ENCODE measurements at regions of chr6 and their contacts with region 1.

Region 1: DNA sequence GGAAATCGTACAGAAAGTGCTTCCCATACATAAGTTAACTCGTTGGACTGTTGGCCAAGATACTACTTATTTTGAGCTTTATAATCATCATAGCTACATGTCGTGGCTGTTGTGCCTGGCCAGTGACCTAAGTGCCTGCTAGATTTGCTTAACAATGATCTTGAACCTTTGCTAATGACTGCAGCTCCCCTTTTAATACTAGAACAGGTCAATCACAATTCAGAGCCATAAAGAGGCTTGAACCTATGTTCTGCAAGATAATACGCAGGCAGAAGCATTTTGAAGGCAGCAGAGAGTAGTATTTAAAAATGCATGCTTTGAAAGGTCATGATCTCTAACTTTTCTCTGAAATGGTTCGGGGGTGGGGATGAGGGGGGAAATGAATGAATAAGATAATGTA is 2.5 kb downstream of the MRS2 start:
- DNase-seq: no peak
- H3K4me3 ChIP-seq: no peak overlapping the region
- H3K27ac ChIP-seq: no peak overlapping the region
- H3K4me1 ChIP-seq: peaks cover 0 to 17% (median 12%) of the 10 kb centered on the region in 4 donors
- H3K27me3 ChIP-seq: no peaks in the 10 kb centered on the region
- CTCF ChIP-seq: no peak
- EP300 ChIP-seq: no peak
- POLR2A ChIP-seq: no peak

Region 2: DNA sequence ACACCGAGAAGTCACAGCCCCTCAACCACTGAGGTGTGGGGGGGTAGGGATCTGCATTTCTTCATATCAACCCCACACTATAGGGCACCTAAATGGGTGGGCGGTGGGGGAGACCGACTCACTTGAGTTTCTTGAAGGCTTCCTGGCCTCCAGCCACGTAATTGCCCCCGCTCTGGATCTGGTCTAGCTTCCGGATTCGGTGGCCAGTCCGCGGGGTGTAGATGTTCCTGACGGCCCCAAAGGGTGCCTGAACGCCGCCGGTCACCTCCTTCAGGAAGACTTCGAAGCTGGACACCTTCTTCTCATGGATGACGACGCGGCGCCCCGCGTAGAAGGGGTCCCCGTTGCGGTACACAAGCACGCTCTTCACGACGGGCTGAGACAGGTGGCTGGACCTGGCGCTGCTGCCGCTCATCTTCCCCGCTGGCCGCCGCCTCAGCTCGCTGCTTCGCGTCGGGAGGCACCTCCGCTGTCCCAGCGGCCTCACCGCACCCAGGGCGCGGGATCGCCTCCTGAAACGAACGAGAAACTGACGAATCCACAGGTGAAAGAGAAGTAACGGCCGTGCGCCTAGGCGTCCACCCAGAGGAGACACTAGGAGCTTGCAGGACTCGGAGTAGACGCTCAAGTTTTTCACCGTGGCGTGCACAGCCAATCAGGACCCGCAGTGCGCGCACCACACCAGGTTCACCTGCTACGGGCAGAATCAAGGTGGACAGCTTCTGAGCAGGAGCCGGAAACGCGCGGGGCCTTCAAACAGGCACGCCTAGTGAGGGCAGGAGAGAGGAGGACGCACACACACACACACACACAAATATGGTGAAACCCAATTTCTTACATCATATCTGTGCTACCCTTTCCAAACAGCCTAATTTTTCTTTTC is 47.7 kb before region 1 on chr6 and contains the start of gene DCDC2:
- intact Hi-C with region 1: loop called (anchors 2 kb)
- DNase-seq: peak; percentile 64
- H3K4me3 ChIP-seq: peak within 1 kb of the TSS in 3 of 4 donors; percentile 11 to 34 (median 23)
- H3K27ac ChIP-seq: no peak within 1 kb of the TSS
- H3K4me1 ChIP-seq: peaks cover 4 to 25% (median 17%) of the 10 kb centered on the region in 4 donors
- H3K27me3 ChIP-seq: no peaks in the 10 kb centered on the region
- CTCF ChIP-seq: no peak
- EP300 ChIP-seq: no peak
- POLR2A ChIP-seq: no peak
- total RNA-seq, gene DCDC2: under 0.01 TPM in 1 of 4 donors, not detected in the others